Aorta (tissue), 5 donors: ENCODE measurements at regions of chr10 and their contacts with region 1.

Region 1: DNA sequence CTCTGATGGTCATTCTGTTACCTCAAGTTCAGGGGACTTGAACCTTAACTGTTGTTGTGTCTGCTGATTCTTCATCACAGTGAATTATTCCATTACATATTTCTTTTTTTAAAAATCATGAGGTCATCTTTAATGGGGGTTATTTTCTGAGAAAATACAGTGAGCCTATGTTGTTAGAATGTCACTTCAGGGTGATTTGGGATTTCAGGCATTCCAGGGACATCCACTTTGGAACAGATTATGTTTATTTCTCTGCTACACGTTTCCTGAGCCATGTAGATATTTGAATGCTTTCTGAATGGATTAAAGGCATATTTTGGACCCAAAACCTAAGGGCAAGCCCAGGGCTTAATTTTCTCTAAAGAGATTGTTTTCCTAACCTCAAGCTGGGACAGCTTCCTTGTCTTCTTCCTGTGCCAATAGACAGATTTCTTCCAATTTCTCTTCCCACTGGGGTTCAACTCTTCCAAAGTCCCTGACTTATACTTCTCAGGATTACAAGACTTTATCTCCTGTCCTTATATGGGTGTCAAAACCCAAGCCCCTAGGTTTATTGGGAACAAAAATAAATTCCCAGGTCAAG is 271.7 kb downstream of the ARHGAP12 start:
- DNase-seq: no peak
- ATAC-seq: peak; percentile 72
- H3K4me3 ChIP-seq: no peak overlapping the region
- H3K27ac ChIP-seq: peak overlapping the region in 1 of 2 donors; percentile 28
- H3K4me1 ChIP-seq: no peaks in the 10 kb centered on the region
- H3K27me3 ChIP-seq: no peaks in the 10 kb centered on the region

Region 2: GRCh38 chr10:31515819-31516402 is 141.0 kb before region 1 on chr10:
- intact Hi-C with region 1: no loop called
- DNase-seq: no peak
- ATAC-seq: no peak
- H3K4me3 ChIP-seq: no peak overlapping the region
- H3K27ac ChIP-seq: no peak overlapping the region
- H3K4me1 ChIP-seq: no peaks in the 10 kb centered on the region
- H3K27me3 ChIP-seq: no peaks in the 10 kb centered on the region

Region 3: GRCh38 chr10:31697271-31698180 is 40.6 kb after region 1 on chr10:
- intact Hi-C with region 1: loop called in 1 of 2 experiments (anchors 5 kb)
- DNase-seq: peak; percentile 95 to 97
- ATAC-seq: peak; percentile 91
- H3K4me3 ChIP-seq: no peak overlapping the region
- H3K27ac ChIP-seq: peak overlapping the region; percentile 98 to 99
- H3K4me1 ChIP-seq: peaks cover 2 to 10% of the 10 kb centered on the region in 2 donors
- H3K27me3 ChIP-seq: no peaks in the 10 kb centered on the region